Mammary epithelial cell (primary cell): ENCODE measurements at regions of chr10 and their contacts with region 1.

Region 1: DNA sequence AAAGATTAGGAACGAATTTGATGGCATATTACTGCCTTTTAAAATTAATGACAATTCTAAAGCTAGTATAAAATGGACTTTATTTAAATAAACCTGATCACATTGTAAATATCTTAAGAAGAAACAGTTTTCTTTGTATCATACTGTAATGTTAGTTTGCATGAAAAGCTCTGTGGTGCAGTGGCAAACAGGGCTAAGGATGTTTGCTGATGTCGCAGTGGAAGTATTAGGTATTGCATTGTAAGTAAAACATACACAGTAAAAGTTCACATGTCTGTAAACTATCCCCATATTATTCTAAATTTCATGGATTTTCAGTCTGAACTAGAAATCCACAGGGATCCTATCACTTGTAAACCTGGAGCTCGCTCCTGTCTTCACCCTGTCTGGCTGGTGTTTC is 252.6 kb upstream of the ZNF32 start:
- DNase-seq: no peak
- H3K4me3 ChIP-seq: no peak overlapping the region
- H3K27ac ChIP-seq: no peak overlapping the region
- H3K4me1 ChIP-seq: no peaks in the 10 kb centered on the region
- H3K27me3 ChIP-seq: no peaks in the 10 kb centered on the region
- CTCF ChIP-seq: no peak

Region 2: GRCh38 chr10:43846187-43846680 is 55.1 kb before region 1 on chr10:
- CTCF ChIA-PET with region 1: no interaction called
- dilution Hi-C with region 1: loop called (anchors 5 kb)
- in situ Hi-C with region 1: no loop called
- intact Hi-C with region 1: no loop called
- DNase-seq: no peak
- H3K4me3 ChIP-seq: no peak overlapping the region
- H3K27ac ChIP-seq: no peak overlapping the region
- H3K4me1 ChIP-seq: no peaks in the 10 kb centered on the region
- H3K27me3 ChIP-seq: no peaks in the 10 kb centered on the region
- CTCF ChIP-seq: no peak